Breast epithelium (tissue), 4 donors: ENCODE measurements at regions of chr12 and their contacts with region 1.

Region 1: GRCh38 chr12:129119537-129119936 is 266.3 kb downstream of the GLT1D1 start:
- DNase-seq: no peak
- H3K4me3 ChIP-seq: no peak overlapping the region
- H3K27ac ChIP-seq: no peak overlapping the region
- H3K4me1 ChIP-seq: no peaks in the 10 kb centered on the region
- H3K27me3 ChIP-seq: no peaks in the 10 kb centered on the region
- CTCF ChIP-seq: no peak
- POLR2A ChIP-seq: no peak

Region 2: DNA sequence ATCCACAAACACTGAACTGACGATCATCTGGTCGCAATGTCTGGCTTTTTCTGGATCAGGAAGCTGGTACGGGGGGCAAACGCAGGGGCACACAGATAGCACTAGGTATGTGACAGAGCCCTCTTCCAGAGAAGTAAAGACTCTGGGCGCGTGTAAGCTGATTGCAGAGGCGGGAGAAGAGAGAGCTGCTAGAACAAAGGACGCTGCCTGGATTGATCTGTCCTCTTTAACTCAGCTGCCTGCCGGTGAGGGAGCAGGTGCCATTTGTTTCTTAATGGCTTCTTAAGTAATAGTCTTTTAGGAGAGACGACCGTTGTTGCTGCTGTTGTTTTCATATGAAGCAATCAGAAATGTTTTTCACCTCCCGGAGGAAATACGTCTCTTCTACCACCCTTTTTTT is 188.9 kb before region 1 on chr12:
- intact Hi-C with region 1: no loop called
- DNase-seq: no peak
- H3K4me3 ChIP-seq: no peak overlapping the region
- H3K27ac ChIP-seq: no peak overlapping the region
- H3K4me1 ChIP-seq: no peaks in the 10 kb centered on the region
- H3K27me3 ChIP-seq: no peaks in the 10 kb centered on the region
- CTCF ChIP-seq: no peak
- POLR2A ChIP-seq: no peak

Region 3: DNA sequence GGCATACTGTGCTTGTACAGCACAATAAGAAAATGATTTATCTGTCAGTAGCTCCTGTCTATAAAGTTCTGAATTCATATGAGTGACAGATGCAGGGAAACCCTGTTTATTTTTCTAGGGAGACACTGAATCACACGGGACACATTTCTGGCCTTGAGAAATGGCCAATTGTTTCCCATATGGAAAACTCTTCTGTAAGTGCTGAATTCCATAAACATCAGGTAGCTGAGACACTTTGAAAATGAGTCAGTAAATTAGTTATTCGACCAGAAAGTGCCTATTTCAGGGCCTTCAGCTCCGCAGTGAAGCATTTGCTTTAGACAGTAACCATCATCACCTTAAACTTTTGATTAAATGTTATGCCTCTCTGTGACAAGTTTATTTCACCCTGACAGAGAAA is 599.9 kb after region 1 on chr12:
- intact Hi-C with region 1: loop called (anchors 10 kb)
- DNase-seq: no peak
- H3K4me3 ChIP-seq: no peak overlapping the region
- H3K27ac ChIP-seq: no peak overlapping the region
- H3K4me1 ChIP-seq: no peaks in the 10 kb centered on the region
- H3K27me3 ChIP-seq: no peaks in the 10 kb centered on the region
- CTCF ChIP-seq: no peak
- POLR2A ChIP-seq: no peak